Activated CD8-positive, alpha-beta memory T cell treated with anti-CD3 and anti-CD28 coated beads, Interleukin-2, amount 10 ng/mL, durations not matched to agents 7 days and 5 days (primary cell): ENCODE measurements at regions of chr10 and their contacts with region 1.

Region 1: GRCh38 chr10:63256009-63256773 is 123.1 kb downstream of the NRBF2 start:
- DNase-seq: no peak
- ATAC-seq: no peak
- H3K4me3 Mint-ChIP-seq: no peak overlapping the region
- H3K27ac Mint-ChIP-seq: no peak overlapping the region
- H3K4me1 Mint-ChIP-seq: peaks cover 51% of the 10 kb centered on the region
- H3K27me3 Mint-ChIP-seq: no peaks in the 10 kb centered on the region

Region 2: DNA sequence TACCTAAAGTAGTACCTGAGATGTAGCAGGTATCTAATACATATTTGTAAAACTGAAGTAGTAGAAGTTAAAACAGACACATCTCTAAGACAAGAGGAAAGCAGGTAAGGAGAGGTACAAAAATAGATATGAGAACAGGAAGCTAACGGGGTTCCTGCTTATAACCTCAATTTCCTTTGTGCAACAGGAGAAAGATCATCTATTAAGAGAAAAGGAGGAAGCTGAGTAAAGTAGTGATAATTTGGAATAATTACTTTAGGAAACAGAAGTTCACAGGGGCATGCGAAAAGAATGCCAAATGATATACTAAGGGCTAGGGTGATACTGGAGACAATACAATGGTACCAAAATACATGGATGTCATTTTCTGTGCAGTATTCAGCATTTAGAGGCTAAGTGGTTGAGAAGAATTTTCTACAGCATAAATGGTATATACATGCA is 14.3 kb before region 1 on chr10:
- CTCF ChIA-PET with region 1: interaction called, 12 read pairs
- DNase-seq: no peak
- ATAC-seq: peak; percentile 49
- H3K4me3 Mint-ChIP-seq: peak overlapping the region; percentile 72
- H3K27ac Mint-ChIP-seq: peak overlapping the region; percentile 88
- H3K4me1 Mint-ChIP-seq: peaks cover 74% of the 10 kb centered on the region
- H3K27me3 Mint-ChIP-seq: no peaks in the 10 kb centered on the region